Naive thymus-derived CD4-positive, alpha-beta T cell (primary cell): ENCODE measurements at regions of chr12 and their contacts with region 1.

Region 1: DNA sequence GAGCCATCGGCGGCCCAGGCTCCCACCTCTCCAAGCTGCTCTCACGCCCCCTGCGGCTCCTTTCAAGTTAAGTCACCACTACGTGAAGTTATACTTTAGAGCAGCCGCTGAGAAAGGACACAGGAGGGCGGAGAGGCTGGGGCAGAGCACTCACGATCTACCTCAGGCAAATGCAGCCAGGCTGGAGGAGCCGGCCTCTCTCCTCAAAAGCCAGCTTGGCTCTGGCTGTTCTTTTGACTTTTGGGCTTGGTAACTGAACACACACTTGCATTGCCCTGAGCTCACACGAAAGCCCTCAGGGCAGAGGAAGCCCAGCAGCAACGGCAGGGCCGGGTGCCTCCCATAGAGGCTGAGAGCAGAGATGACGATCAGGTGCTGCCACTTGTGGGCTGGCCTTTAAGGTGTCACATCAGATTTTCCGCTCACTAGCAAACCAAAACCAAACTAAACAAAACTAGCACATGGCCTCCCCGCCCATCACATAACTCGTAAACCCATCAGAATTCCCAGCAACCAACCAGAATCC is 75.2 kb downstream of the PITPNM2 start:
- DNase-seq: peak; percentile 45 to 88 (median 81)
- ATAC-seq: peak; percentile 91
- H3K4me3 ChIP-seq: peak overlapping the region; percentile 65
- H3K4me3 Mint-ChIP-seq: peak overlapping the region; percentile 88 to 97 (median 92)
- H3K27ac ChIP-seq: peak overlapping the region; percentile 74
- H3K27ac Mint-ChIP-seq: peak overlapping the region; percentile 92 to 99 (median 97)
- H3K4me1 ChIP-seq: peaks cover 23 to 30% of the 10 kb centered on the region in 2 donors
- H3K4me1 Mint-ChIP-seq: peaks cover 45 to 82% (median 71%) of the 10 kb centered on the region in 7 donors
- H3K27me3 ChIP-seq: no peaks in the 10 kb centered on the region
- H3K27me3 Mint-ChIP-seq: no peaks in the 10 kb centered on the region

Region 2: DNA sequence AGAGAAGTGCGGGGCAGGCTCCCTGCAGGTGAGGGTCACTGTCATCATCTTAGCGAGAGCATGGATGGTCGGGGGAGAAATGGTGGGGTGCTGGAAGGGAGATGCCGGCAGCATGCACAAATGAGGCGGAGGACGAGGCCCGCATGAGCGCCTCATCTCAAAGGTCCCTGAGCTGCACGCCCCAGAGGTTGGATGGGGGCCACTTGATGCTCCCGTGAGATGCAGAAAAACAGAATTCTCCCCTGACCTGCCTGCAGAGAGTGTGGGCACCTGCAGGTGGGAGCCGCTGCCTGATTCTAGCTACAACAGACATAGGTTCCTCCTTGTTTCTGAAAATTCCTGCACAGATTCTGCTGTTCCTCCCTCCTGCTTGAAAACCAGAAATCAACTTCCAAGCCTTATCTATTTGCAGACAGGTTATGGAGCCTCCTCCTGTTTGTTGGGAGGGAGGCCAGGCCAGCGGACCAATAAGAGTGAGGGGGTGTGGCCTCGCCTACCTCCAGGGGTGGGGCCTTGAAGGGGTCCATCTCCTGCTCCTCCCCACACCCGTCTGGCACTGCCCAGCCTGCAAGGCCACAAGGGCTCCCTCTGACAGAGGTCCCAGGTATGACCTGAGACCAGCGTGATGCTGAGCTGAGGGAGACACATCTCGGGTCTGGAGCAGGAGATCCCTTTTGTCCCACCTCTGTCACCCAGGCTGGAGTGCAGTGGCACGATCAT is 1562.1 kb before region 1 on chr12:
- CTCF ChIA-PET with region 1: no interaction called
- POLR2A ChIA-PET with region 1: no interaction called
- intact Hi-C with region 1: no loop called
- DNase-seq: no peak
- ATAC-seq: peak; percentile 55
- H3K4me3 ChIP-seq: no peak overlapping the region
- H3K4me3 Mint-ChIP-seq: peak overlapping the region in 2 of 10 donors; percentile 20 to 43
- H3K27ac ChIP-seq: peak overlapping the region; percentile 52
- H3K27ac Mint-ChIP-seq: peak overlapping the region; percentile 60 to 90 (median 82)
- H3K4me1 ChIP-seq: peaks cover 0 to 9% of the 10 kb centered on the region in 2 donors
- H3K4me1 Mint-ChIP-seq: peaks cover 5 to 19% (median 9%) of the 10 kb centered on the region in 7 donors
- H3K27me3 ChIP-seq: no peaks in the 10 kb centered on the region
- H3K27me3 Mint-ChIP-seq: no peaks in the 10 kb centered on the region

Region 3: GRCh38 chr12:122980183-122981046 is 95.3 kb before region 1 on chr12 and contains the start of gene ARL6IP4:
- CTCF ChIA-PET with region 1: interaction called, 4 read pairs
- POLR2A ChIA-PET with region 1: interaction called, 16 read pairs
- intact Hi-C with region 1: loop called in 1 of 2 experiments (anchors 2 kb)
- DNase-seq: peak; percentile 46 to 72 (median 63)
- ATAC-seq: peak; percentile 81
- H3K4me3 ChIP-seq: peak within 1 kb of the TSS; percentile 84
- H3K4me3 Mint-ChIP-seq: peak within 1 kb of the TSS; percentile 86 to 95 (median 90)
- H3K27ac ChIP-seq: peak within 1 kb of the TSS; percentile 81
- H3K27ac Mint-ChIP-seq: peak within 1 kb of the TSS; percentile 81 to 92 (median 87)
- H3K4me1 ChIP-seq: peaks cover 41 to 46% of the 10 kb centered on the region in 2 donors
- H3K4me1 Mint-ChIP-seq: peaks cover 39 to 73% (median 53%) of the 10 kb centered on the region in 7 donors
- H3K27me3 ChIP-seq: no peaks in the 10 kb centered on the region
- H3K27me3 Mint-ChIP-seq: no peaks in the 10 kb centered on the region
- total RNA-seq, gene ARL6IP4: 137 to 189 (median 169) TPM

Region 4: DNA sequence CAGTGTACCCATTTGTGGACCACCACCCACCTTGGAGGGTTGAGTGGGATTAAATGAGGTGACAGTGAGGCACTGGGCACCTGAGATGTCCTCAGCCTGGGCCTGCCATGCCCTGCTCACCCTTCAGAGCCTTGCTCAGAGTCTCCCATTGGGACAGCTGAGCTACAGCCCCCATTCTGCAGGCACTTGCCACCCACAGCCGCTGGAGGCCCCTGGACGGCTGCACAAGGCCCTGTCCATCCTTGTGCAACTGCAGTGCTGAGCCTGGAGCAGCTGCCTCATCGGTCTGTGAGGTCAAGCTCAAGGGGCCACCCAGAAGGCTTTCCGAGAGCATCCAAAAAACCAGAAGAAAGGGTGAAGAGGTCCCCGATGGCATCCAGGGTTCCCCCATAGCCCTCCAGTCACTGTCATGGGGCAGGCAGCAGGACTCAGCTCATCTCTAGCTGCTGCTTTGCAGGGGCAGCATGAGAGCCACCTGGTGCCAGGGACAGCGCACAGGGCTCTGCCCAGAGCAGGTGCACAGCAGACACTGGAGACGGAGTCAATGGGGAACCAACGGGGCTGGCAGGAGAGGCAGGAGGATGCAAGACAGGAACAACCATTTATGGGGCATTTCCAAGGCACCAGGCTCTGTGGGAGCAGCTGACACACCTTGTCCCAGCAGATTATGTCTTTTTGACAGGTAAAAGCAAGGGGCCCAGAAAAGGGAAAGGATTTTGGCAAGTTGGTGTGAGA is 10.7 kb before region 1 on chr12:
- CTCF ChIA-PET with region 1: interaction called, 6 read pairs
- POLR2A ChIA-PET with region 1: interaction called, 11 read pairs
- intact Hi-C with region 1: no loop called
- DNase-seq: no peak
- ATAC-seq: no peak
- H3K4me3 ChIP-seq: no peak overlapping the region
- H3K4me3 Mint-ChIP-seq: peak overlapping the region in 4 of 10 donors; percentile 22 to 55 (median 50)
- H3K27ac ChIP-seq: no peak overlapping the region
- H3K27ac Mint-ChIP-seq: peak overlapping the region in 7 of 9 donors; percentile 50 to 88 (median 66)
- H3K4me1 ChIP-seq: peaks cover 0 to 24% of the 10 kb centered on the region in 2 donors
- H3K4me1 Mint-ChIP-seq: peaks cover 32 to 79% (median 66%) of the 10 kb centered on the region in 7 donors
- H3K27me3 ChIP-seq: no peaks in the 10 kb centered on the region
- H3K27me3 Mint-ChIP-seq: no peaks in the 10 kb centered on the region

Region 5: GRCh38 chr12:123106628-123107359 is 31.1 kb after region 1 on chr12:
- CTCF ChIA-PET with region 1: interaction called, 8 read pairs
- POLR2A ChIA-PET with region 1: interaction called, 15 read pairs
- intact Hi-C with region 1: loop called in 1 of 2 experiments (anchors 1 kb)
- DNase-seq: peak in 8 of 9 donors; percentile 35 to 69 (median 48)
- ATAC-seq: peak; percentile 91
- H3K4me3 ChIP-seq: peak overlapping the region; percentile 48
- H3K4me3 Mint-ChIP-seq: peak overlapping the region; percentile 26 to 87 (median 78)
- H3K27ac ChIP-seq: peak overlapping the region; percentile 62
- H3K27ac Mint-ChIP-seq: peak overlapping the region; percentile 87 to 98 (median 95)
- H3K4me1 ChIP-seq: peaks cover 20 to 45% of the 10 kb centered on the region in 2 donors
- H3K4me1 Mint-ChIP-seq: peaks cover 52 to 85% (median 79%) of the 10 kb centered on the region in 7 donors
- H3K27me3 ChIP-seq: no peaks in the 10 kb centered on the region
- H3K27me3 Mint-ChIP-seq: no peaks in the 10 kb centered on the region

Region 6: GRCh38 chr12:123120452-123121166 is 44.9 kb after region 1 on chr12:
- CTCF ChIA-PET with region 1: interaction called, 15 read pairs
- POLR2A ChIA-PET with region 1: interaction called, 79 read pairs
- intact Hi-C with region 1: loop called (anchors 1 kb)
- DNase-seq: peak in 7 of 9 donors; percentile 27 to 76 (median 67)
- ATAC-seq: peak; percentile 60
- H3K4me3 ChIP-seq: no peak overlapping the region
- H3K4me3 Mint-ChIP-seq: peak overlapping the region; percentile 66 to 83 (median 73)
- H3K27ac ChIP-seq: peak overlapping the region; percentile 71
- H3K27ac Mint-ChIP-seq: peak overlapping the region; percentile 91 to 100 (median 96)
- H3K4me1 ChIP-seq: peaks cover 3 to 68% of the 10 kb centered on the region in 2 donors
- H3K4me1 Mint-ChIP-seq: peaks cover 40 to 81% (median 75%) of the 10 kb centered on the region in 7 donors
- H3K27me3 ChIP-seq: no peaks in the 10 kb centered on the region
- H3K27me3 Mint-ChIP-seq: no peaks in the 10 kb centered on the region

Region 7: DNA sequence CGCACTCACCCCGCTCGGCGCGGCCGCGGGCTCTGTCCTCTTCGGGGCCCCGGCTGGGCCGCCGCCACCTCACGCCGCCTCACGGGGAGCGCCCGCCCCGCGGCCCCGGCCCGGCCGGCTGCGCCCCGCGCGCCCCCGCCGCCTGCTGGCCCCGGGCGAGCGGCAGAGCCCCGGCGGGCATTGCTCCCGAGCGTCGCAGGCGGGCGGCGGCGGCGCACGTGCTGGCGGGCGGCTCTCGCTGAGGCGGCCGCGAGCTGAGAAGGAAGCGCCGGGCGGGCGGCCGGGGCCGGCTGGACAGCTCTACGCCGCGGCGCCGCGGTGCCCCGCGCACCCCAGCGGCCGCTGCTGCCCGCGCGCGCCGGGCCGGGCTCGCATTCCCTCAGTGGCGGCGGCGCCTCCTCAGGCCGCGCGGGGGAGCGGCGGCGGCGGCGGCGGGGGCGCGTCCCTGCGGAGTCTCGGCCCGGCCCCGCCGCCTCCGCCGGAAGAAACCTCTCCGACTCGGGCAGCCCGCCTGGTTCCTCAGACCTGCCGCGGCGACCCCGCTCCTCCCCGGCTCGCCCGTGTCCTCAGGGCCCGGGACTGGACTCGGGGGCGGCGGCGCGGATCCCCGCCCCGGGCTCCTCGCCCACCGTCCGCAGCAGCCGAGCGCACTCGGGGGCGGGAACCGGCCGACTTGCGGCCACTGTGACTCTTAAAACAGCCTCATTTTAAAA is 75.2 kb after region 1 on chr12 and contains the start of gene PITPNM2:
- CTCF ChIA-PET with region 1: interaction called, 19 read pairs
- POLR2A ChIA-PET with region 1: interaction called, 36 read pairs
- intact Hi-C with region 1: loop called (anchors 1 kb)
- DNase-seq: peak; percentile 44 to 78 (median 68)
- ATAC-seq: peak; percentile 90
- H3K4me3 ChIP-seq: peak within 1 kb of the TSS; percentile 74
- H3K4me3 Mint-ChIP-seq: peak within 1 kb of the TSS; percentile 83 to 95 (median 89)
- H3K27ac ChIP-seq: peak within 1 kb of the TSS; percentile 82
- H3K27ac Mint-ChIP-seq: peak within 1 kb of the TSS; percentile 80 to 92 (median 90)
- H3K4me1 ChIP-seq: peaks cover 6 to 29% of the 10 kb centered on the region in 2 donors
- H3K4me1 Mint-ChIP-seq: peaks cover 24 to 48% (median 40%) of the 10 kb centered on the region in 7 donors
- H3K27me3 ChIP-seq: no peaks in the 10 kb centered on the region
- H3K27me3 Mint-ChIP-seq: peaks cover 0 to 20% (median 0%) of the 10 kb centered on the region in 5 donors
- total RNA-seq, gene PITPNM2: 22.2 to 65.3 (median 56.6) TPM